WTC11 (cell line): ENCODE measurements at regions of chr14 and their contacts with region 1.

Region 1: GRCh38 chr14:65412032-65412846 is at the start of gene FUT8:
- DNase-seq: peak; percentile 96
- ATAC-seq: peak; percentile 82
- H3K4me3 Mint-ChIP-seq: peak within 1 kb of the TSS; percentile 93
- H3K27ac Mint-ChIP-seq: peak within 1 kb of the TSS; percentile 97
- H3K4me1 Mint-ChIP-seq: peaks cover 25% of the 10 kb centered on the region
- H3K27me3 Mint-ChIP-seq: peaks cover 7% of the 10 kb centered on the region; the same call in 1 of the 2 replicates
- CTCF ChIP-seq: no peak
- total RNA-seq, gene FUT8: 28.6 to 37.9 TPM (median 31.9 TPM) in 3 replicates

Region 2: GRCh38 chr14:65164068-65164824 is 248.0 kb before region 1 on chr14:
- CTCF ChIA-PET with region 1: interaction called, 11 read pairs
- POLR2A ChIA-PET with region 1: no interaction called
- DNase-seq: no peak
- ATAC-seq: peak; percentile 62
- H3K4me3 Mint-ChIP-seq: no peak overlapping the region
- H3K27ac Mint-ChIP-seq: no peak overlapping the region
- H3K4me1 Mint-ChIP-seq: no peaks in the 10 kb centered on the region
- H3K27me3 Mint-ChIP-seq: no peaks in the 10 kb centered on the region; the same call in 1 of the 2 replicates
- CTCF ChIP-seq: peak; percentile 57

Region 3: DNA sequence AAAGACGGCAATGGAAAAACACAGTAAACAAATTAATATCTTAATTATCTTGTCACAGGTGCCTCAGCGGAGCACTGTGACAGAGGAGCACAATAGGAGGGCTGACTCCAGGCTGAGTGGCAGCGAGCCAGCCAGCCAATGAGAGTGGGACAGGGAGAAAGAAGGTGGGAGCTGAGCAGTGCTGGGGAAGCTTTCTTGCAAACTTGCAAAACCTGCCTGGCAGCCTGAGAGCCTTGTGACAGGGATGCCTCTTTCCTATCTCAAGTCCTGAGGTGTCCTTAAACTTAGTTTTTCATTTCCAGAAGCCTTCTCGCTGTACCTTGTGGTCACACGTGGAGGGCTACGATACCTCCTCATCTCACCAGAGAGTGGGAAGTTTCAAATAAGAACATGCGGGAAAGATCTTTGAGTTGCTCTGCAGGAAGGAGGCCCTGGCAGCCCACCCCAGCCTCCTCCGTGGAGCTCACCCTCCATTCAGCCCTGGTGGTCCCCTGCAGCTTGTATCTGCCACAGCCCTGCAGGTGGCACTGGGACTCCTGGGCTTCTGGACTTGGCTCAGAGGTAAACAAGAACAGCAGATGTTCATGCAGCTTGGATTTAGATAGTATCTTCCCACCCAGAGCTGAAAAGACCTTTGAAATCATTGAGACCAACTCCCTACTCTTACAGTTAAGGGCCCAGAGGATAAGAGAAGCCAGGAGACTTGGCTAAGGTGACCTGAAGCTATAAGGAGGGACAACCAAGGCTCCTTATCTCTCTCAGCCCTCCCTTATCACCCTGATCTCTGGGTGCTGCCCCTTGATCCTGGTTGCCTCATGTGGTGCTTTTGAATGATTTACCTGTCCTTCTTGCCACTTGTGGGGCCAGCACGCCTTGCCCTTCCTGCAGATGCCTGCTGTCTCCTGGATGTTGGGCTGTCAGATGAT is 156.4 kb before region 1 on chr14:
- CTCF ChIA-PET with region 1: interaction called, 10 read pairs
- POLR2A ChIA-PET with region 1: interaction called, 4 read pairs
- DNase-seq: peak; percentile 84
- ATAC-seq: peak; percentile 99
- H3K4me3 Mint-ChIP-seq: peak overlapping the region; percentile 55
- H3K27ac Mint-ChIP-seq: peak overlapping the region; percentile 98
- H3K4me1 Mint-ChIP-seq: peaks cover 26% of the 10 kb centered on the region
- H3K27me3 Mint-ChIP-seq: no peaks in the 10 kb centered on the region
- CTCF ChIP-seq: no peak

Region 4: GRCh38 chr14:65267856-65268255 is 144.4 kb before region 1 on chr14:
- CTCF ChIA-PET with region 1: no interaction called
- POLR2A ChIA-PET with region 1: no interaction called
- DNase-seq: no peak
- ATAC-seq: no peak
- H3K4me3 Mint-ChIP-seq: no peak overlapping the region
- H3K27ac Mint-ChIP-seq: no peak overlapping the region
- H3K4me1 Mint-ChIP-seq: no peaks in the 10 kb centered on the region
- H3K27me3 Mint-ChIP-seq: no peaks in the 10 kb centered on the region; the same call in 1 of the 2 replicates
- CTCF ChIP-seq: no peak

Region 5: DNA sequence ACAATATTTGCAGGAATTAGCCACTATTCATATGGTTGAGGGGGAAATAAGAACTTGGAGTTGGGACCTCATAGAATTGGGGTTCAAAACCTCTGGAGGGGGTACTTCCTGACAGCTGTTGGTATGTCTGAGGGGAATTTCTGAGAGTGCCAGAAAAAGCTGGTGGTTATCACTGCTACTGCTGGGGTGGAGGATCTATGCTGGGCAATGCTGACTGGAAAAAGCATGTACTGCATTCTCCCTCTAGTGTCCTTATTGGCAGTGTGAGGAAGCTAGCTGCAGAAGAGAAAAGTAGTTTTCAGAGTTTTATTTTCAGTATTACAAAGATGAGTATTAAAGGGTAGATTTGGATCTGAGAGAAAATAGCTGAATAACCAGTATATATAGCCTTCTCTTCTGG is 89.1 kb after region 1 on chr14:
- CTCF ChIA-PET with region 1: interaction called, 14 read pairs
- POLR2A ChIA-PET with region 1: no interaction called
- DNase-seq: no peak
- ATAC-seq: no peak
- H3K4me3 Mint-ChIP-seq: no peak overlapping the region
- H3K27ac Mint-ChIP-seq: no peak overlapping the region
- H3K4me1 Mint-ChIP-seq: no peaks in the 10 kb centered on the region
- H3K27me3 Mint-ChIP-seq: peaks cover 61% of the 10 kb centered on the region
- CTCF ChIP-seq: no peak

Region 6: GRCh38 chr14:65791191-65791981 is 379.1 kb after region 1 on chr14:
- CTCF ChIA-PET with region 1: interaction called, 17 read pairs
- POLR2A ChIA-PET with region 1: no interaction called
- DNase-seq: no peak
- ATAC-seq: peak; percentile 22; the same call in 1 of the 2 replicates
- H3K4me3 Mint-ChIP-seq: no peak overlapping the region
- H3K27ac Mint-ChIP-seq: no peak overlapping the region
- H3K4me1 Mint-ChIP-seq: no peaks in the 10 kb centered on the region
- H3K27me3 Mint-ChIP-seq: no peaks in the 10 kb centered on the region
- CTCF ChIP-seq: no peak

Region 7: GRCh38 chr14:65832431-65833266 is 420.4 kb after region 1 on chr14:
- CTCF ChIA-PET with region 1: interaction called, 13 read pairs
- POLR2A ChIA-PET with region 1: no interaction called
- DNase-seq: no peak
- ATAC-seq: peak; percentile 48
- H3K4me3 Mint-ChIP-seq: no peak overlapping the region
- H3K27ac Mint-ChIP-seq: no peak overlapping the region
- H3K4me1 Mint-ChIP-seq: peaks cover 54% of the 10 kb centered on the region
- H3K27me3 Mint-ChIP-seq: no peaks in the 10 kb centered on the region
- CTCF ChIP-seq: no peak